HCT116 (cell line): ENCODE measurements at regions of chr4 and their contacts with region 1.

Region 1: GRCh38 chr4:22688236-22688635 is 4.5 kb upstream of the GBA3 start:
- DNase-seq: no peak
- ATAC-seq: no peak
- H3K4me3 ChIP-seq: no peak overlapping the region
- H3K27ac ChIP-seq: no peak overlapping the region
- H3K4me1 ChIP-seq: no peaks in the 10 kb centered on the region
- H3K27me3 ChIP-seq: peaks cover 34% of the 10 kb centered on the region
- CTCF ChIP-seq: no peak
- POLR2A ChIP-seq: no peak
- RAD21 ChIP-seq: no peak

Region 2: GRCh38 chr4:21790438-21791029 is 897.7 kb before region 1 on chr4:
- CTCF ChIA-PET with region 1: interaction called, 6 read pairs
- POLR2A ChIA-PET with region 1: no interaction called
- RAD21 ChIA-PET with region 1: no interaction called
- intact Hi-C with region 1: loop called (anchors 2 kb)
- DNase-seq: peak; percentile 16
- ATAC-seq: no peak
- H3K4me3 ChIP-seq: no peak overlapping the region
- H3K27ac ChIP-seq: no peak overlapping the region
- H3K4me1 ChIP-seq: no peaks in the 10 kb centered on the region
- H3K27me3 ChIP-seq: no peaks in the 10 kb centered on the region
- CTCF ChIP-seq: peak; percentile 22 to 64 (median 40); a peak in 4 of 6 replicates
- POLR2A ChIP-seq: no peak
- RAD21 ChIP-seq: peak; percentile 57

Region 3: GRCh38 chr4:21973850-21974249 is 714.4 kb before region 1 on chr4:
- CTCF ChIA-PET with region 1: no interaction called
- POLR2A ChIA-PET with region 1: no interaction called
- RAD21 ChIA-PET with region 1: no interaction called
- intact Hi-C with region 1: no loop called
- DNase-seq: no peak
- ATAC-seq: no peak
- H3K4me3 ChIP-seq: no peak overlapping the region
- H3K27ac ChIP-seq: no peak overlapping the region
- H3K4me1 ChIP-seq: no peaks in the 10 kb centered on the region
- H3K27me3 ChIP-seq: no peaks in the 10 kb centered on the region
- CTCF ChIP-seq: no peak
- POLR2A ChIP-seq: no peak
- RAD21 ChIP-seq: no peak

Region 4: GRCh38 chr4:22129454-22130029 is 558.7 kb before region 1 on chr4:
- CTCF ChIA-PET with region 1: no interaction called
- POLR2A ChIA-PET with region 1: no interaction called
- RAD21 ChIA-PET with region 1: no interaction called
- intact Hi-C with region 1: loop called (anchors 10 kb)
- DNase-seq: peak; percentile 7
- ATAC-seq: peak; percentile 80
- H3K4me3 ChIP-seq: no peak overlapping the region
- H3K27ac ChIP-seq: no peak overlapping the region
- H3K4me1 ChIP-seq: no peaks in the 10 kb centered on the region
- H3K27me3 ChIP-seq: no peaks in the 10 kb centered on the region
- CTCF ChIP-seq: peak; percentile 21 to 66 (median 64); a peak in 4 of 6 replicates
- POLR2A ChIP-seq: no peak
- RAD21 ChIP-seq: peak; percentile 36

Region 5: DNA sequence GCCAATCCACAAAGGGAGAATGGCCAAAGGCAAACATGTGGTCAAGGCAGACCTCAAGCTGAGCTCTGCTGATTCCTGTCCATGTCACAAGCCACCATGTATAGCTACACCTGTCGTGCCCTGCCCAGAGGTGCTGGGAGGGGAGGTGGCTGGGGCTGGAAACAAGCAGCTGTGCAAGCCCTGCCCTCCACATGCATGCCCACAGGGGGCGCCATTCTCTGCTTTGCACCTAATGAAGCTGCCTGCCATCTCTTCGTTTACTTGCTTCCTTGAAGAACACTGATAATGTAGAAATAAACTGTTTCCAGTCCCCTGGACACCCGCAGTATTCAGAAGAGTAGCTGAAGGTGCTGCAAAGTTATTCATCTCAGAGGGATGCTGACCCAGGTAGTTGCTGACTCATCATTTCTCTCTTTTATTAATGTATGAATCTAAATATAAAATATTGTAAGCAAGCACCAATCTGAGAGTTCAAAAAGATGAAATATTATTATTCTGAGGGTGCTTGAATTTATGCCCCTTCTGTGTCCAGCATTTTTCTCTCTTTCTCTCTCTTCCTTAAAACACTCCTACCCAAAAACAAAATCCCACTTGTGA is 451.0 kb before region 1 on chr4:
- CTCF ChIA-PET with region 1: interaction called, 4 read pairs
- POLR2A ChIA-PET with region 1: no interaction called
- RAD21 ChIA-PET with region 1: no interaction called
- intact Hi-C with region 1: loop called (anchors 2 kb)
- DNase-seq: peak; percentile 29
- ATAC-seq: peak; percentile 96
- H3K4me3 ChIP-seq: no peak overlapping the region
- H3K27ac ChIP-seq: no peak overlapping the region
- H3K4me1 ChIP-seq: no peaks in the 10 kb centered on the region
- H3K27me3 ChIP-seq: no peaks in the 10 kb centered on the region
- CTCF ChIP-seq: peak; percentile 43 to 94 (median 91); a peak in 5 of 6 replicates
- POLR2A ChIP-seq: no peak
- RAD21 ChIP-seq: peak; percentile 58

Region 6: DNA sequence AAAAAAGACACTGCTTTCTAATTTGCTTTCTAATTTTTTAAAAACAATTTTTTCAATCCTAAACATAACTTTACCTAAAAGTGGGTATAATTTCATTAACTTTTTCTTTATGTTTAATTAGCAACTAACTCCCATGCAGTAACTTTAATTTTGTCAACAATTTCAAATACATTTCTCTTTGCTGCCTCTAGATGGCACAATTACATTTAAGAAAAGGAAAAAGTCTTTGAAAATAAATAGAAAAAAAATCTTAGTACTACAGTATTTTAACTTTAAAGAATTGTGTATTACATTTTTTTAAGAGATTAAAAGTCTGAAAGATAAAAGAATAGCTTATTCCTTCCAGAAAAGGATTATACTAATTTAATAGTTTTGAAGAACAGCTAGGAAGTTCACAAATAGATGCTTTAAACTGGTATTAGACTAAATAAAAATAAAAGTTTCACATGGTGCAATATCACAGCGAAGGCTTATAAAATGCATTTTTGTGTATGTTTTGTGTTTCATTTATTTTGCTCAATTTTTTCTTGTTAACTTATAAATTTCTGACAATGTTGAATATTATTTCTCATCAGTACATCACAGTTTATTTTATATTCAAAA is 277.5 kb before region 1 on chr4:
- CTCF ChIA-PET with region 1: no interaction called
- POLR2A ChIA-PET with region 1: no interaction called
- RAD21 ChIA-PET with region 1: no interaction called
- intact Hi-C with region 1: loop called (anchors 1 kb)
- DNase-seq: no peak
- ATAC-seq: no peak
- H3K4me3 ChIP-seq: no peak overlapping the region
- H3K27ac ChIP-seq: no peak overlapping the region
- H3K4me1 ChIP-seq: no peaks in the 10 kb centered on the region
- H3K27me3 ChIP-seq: no peaks in the 10 kb centered on the region
- CTCF ChIP-seq: peak; percentile 24 to 58 (median 46); a peak in 3 of 6 replicates
- POLR2A ChIP-seq: no peak
- RAD21 ChIP-seq: peak; percentile 61

Region 7: DNA sequence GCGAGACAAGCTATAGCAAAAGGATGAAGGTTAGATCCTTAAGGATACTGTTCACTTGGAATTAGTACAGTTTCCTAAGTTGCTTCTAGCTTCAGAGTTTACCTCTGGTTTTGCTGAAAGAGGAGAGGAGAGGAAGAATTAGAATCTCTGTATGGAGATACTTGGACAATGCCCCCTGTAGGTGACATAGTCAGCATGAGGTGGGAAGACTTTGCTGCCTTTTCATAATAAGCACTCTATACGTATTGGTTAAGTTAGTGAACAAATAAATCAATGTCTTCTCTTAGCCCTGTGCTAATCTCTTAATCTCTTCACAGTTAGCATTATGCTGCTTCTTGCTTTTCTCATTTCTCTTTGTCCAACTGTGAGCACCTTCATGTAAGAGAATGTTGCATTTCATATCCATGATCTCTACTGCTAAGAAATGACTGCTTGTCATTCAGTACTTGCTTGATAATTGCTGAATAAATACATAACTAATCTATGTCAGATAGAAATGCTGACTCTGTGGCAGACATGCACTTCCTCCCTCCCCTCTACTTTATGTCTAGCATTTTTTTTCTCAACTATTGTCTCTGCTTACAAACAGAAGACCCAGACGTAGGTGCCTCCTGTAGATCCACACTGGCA is 531.7 kb after region 1 on chr4:
- CTCF ChIA-PET with region 1: no interaction called
- POLR2A ChIA-PET with region 1: no interaction called
- RAD21 ChIA-PET with region 1: no interaction called
- intact Hi-C with region 1: no loop called
- DNase-seq: no peak
- ATAC-seq: no peak
- H3K4me3 ChIP-seq: no peak overlapping the region
- H3K27ac ChIP-seq: no peak overlapping the region
- H3K4me1 ChIP-seq: no peaks in the 10 kb centered on the region
- H3K27me3 ChIP-seq: no peaks in the 10 kb centered on the region
- CTCF ChIP-seq: no peak
- POLR2A ChIP-seq: no peak
- RAD21 ChIP-seq: no peak